OCI-LY7 (cell line): ENCODE measurements at regions of chr16 and their contacts with region 1.

Region 1: DNA sequence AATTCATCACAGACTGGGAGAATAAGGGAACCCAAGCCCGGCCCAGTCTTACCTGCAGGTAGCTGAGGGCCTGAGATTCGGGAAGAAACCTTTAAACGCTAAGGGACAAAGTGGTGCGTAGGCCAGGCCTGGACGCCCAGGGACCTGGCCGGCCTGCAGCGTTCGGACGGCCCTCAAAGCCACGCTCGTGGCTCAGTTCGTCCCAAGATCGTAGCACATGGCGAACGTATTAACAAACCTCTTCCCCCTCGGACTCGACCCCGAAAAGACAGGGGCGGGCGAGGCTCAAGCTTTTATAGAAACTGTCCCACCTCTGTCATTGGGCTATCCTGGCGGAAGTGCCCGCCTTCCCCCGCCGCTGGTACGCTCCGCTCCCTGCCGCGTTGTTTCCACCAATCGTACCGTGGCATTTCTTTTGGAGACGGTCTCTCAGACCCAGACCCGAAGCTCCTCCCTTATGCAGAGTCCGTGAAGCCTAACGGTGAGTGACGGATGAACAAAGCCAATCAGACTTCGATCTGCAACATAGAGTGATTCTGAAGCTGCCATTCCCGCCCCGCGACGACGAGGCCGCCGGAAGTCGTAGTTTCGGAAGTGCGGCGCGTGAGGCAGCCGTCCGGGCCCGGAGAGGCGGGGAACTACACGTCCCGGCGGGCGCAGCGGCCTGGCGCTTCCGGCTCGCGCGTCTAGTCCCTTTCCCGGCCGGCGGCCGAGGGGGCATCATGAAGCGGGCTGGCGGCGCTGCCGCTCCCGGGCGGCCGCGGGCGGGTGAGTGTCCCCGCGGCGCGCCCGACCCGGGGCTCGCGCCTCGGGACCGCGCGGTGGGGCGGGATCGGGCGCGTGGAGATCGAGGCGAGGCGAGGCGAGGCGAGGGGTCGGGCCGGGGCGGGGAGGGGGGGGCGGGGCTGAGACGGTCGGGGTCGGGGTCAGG is at the start of gene TRAF7:
- DNase-seq: peak; percentile 100
- H3K4me3 ChIP-seq: peak within 1 kb of the TSS; percentile 100
- H3K27ac ChIP-seq: peak within 1 kb of the TSS; percentile 83
- H3K4me1 ChIP-seq: peaks cover 39% of the 10 kb centered on the region
- CTCF ChIP-seq: no peak
- total RNA-seq, gene TRAF7: 50.1 and 53.6 TPM in 2 replicates

Region 2: GRCh38 chr16:2213817-2214720 is 58.7 kb after region 1 on chr16:
- CTCF ChIA-PET with region 1: no interaction called
- POLR2A ChIA-PET with region 1: interaction called, 10 read pairs
- intact Hi-C with region 1: no loop called
- DNase-seq: peak; percentile 38
- H3K4me3 ChIP-seq: peak overlapping the region; percentile 98
- H3K27ac ChIP-seq: peak overlapping the region; percentile 41
- H3K4me1 ChIP-seq: peaks cover 26% of the 10 kb centered on the region
- CTCF ChIP-seq: no peak

Region 3: DNA sequence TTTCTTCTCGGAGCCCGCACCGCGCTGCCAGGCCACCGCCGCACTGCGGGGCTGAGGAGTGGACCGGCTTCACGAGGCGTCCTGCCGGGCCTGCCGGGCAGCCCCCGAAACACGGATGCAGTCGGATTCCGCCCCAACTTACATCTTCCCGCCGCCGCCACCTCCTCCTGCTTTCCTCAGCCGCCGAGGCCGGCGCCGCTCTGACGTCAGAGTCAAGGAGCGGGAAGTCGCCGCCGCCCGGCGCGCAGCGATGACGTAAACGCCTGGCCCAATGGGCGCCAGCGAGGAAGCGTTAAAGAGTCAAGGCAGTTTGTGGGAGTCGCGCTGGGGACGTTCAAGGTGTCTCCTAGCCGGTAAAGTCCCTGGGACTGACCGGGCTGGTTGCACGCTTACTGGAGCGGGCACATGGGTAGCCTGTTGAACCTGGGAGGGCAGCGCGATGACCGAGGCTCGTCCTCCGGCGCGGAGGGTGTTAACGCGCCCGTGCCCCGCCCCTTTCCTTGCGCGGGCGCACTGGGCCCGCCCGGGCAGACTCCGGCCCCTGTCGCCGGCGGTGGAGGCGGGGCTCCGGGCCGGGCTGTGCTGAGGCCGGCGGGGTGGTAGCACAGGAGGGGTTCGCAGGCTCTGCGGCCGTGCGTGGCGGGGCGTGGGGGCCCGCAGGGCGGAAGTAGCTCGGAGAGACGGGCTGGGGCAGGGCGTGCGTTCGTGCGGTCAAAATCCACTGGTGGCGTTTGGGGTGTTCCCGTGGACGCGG is 112.7 kb after region 1 on chr16 and contains the start of gene RNPS1:
- CTCF ChIA-PET with region 1: no interaction called
- POLR2A ChIA-PET with region 1: interaction called, 3 read pairs
- intact Hi-C with region 1: loop called (anchors 2 kb)
- DNase-seq: peak; percentile 98
- H3K4me3 ChIP-seq: peak within 1 kb of the TSS; percentile 80
- H3K27ac ChIP-seq: peak within 1 kb of the TSS; percentile 74
- H3K4me1 ChIP-seq: peaks cover 31% of the 10 kb centered on the region
- CTCF ChIP-seq: no peak
- total RNA-seq, gene RNPS1: 211 and 225 TPM in 2 replicates